Esophagus muscularis mucosa (tissue), 4 donors: ENCODE measurements at regions of chr17 and their contacts with region 1.

Region 1: DNA sequence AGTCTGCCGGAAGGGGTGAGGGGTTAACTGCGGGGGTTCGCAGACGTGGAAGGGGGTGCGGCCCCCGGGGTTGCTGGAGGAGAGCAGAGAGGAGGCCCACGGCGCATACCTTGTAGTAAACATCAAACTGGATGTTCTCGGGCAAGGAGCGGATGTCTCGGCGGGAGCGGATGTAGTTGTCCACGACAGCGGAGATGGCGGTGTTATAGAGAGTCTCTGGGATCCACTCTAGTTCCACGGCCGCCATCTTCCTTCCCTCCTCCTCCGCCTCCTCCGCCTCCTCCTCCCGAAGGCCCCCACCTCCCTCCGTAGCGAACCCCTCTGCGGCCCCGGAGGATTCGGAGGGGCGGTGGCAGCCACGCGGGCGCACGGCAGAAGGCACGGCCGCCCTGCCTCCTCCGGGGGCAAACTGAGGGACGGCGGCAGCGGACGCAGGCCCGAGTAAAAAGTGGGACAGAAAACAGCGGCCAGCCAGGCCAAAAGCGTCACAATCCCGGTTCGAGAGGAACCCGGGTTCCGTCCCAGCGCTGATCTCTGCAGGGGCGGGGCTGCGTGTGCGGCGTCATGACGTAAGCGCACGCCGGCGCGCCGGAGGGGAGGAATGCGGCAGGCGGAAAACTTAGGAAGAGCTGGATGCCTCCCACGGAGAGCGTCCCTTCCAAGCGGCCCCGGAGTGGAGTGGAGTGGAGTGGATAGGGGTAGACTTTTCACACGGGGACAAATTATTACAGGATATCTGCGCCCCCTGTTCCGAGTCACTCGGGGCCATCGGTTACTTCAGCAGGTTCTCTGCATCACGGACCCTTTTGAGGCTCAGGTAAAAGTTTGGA is at the start of gene APPBP2:
- DNase-seq: peak; percentile 97
- H3K4me3 ChIP-seq: peak within 1 kb of the TSS; percentile 83 to 98 (median 90)
- H3K27ac ChIP-seq: peak within 1 kb of the TSS; percentile 98 to 100 (median 98)
- H3K4me1 ChIP-seq: peaks cover 27 to 49% (median 46%) of the 10 kb centered on the region in 4 donors
- H3K27me3 ChIP-seq: no peaks in the 10 kb centered on the region
- CTCF ChIP-seq: peak in 1 of 3 experiments; percentile 6
- EP300 ChIP-seq: no peak
- POLR2A ChIP-seq: peak; percentile 58
- total RNA-seq, gene APPBP2: 24.9 to 35.4 (median 27.9) TPM

Region 2: DNA sequence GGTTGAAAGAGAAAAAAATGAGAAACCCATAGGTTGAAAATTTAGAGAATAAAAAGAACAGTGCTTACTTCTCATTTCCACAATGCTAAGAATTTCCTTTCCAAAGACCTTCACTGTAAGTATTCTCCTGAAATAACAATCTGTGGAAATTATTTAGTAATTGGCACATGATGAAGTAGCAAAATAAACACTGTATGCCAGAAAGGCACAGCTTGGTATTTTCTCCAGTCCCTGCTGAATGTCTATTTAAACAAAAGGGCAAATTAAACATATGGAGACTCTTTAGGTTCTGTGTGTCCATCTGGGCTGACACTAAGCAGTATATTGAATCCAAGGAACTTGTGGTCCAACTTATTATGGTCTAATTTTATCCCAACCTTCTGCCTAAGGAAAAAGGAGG is 57.5 kb before region 1 on chr17:
- intact Hi-C with region 1: loop called (anchors 10 kb)
- DNase-seq: no peak
- H3K4me3 ChIP-seq: no peak overlapping the region
- H3K27ac ChIP-seq: peak overlapping the region; percentile 35 to 54 (median 42)
- H3K4me1 ChIP-seq: peaks cover 28 to 44% (median 38%) of the 10 kb centered on the region in 4 donors
- H3K27me3 ChIP-seq: no peaks in the 10 kb centered on the region
- CTCF ChIP-seq: no peak
- EP300 ChIP-seq: no peak
- POLR2A ChIP-seq: no peak

Region 3: GRCh38 chr17:60600490-60601446 is 74.9 kb after region 1 on chr17:
- intact Hi-C with region 1: loop called (anchors 1 kb)
- DNase-seq: peak; percentile 93
- H3K4me3 ChIP-seq: peak overlapping the region; percentile 73 to 99 (median 98)
- H3K27ac ChIP-seq: peak overlapping the region; percentile 97 to 99 (median 98)
- H3K4me1 ChIP-seq: peaks cover 28 to 50% (median 46%) of the 10 kb centered on the region in 4 donors
- H3K27me3 ChIP-seq: no peaks in the 10 kb centered on the region
- CTCF ChIP-seq: peak; percentile 70 to 83 (median 72)
- EP300 ChIP-seq: no peak
- POLR2A ChIP-seq: no peak